MCF 10A (cell line): ENCODE measurements at regions of chr17 and their contacts with region 1.

Region 1: DNA sequence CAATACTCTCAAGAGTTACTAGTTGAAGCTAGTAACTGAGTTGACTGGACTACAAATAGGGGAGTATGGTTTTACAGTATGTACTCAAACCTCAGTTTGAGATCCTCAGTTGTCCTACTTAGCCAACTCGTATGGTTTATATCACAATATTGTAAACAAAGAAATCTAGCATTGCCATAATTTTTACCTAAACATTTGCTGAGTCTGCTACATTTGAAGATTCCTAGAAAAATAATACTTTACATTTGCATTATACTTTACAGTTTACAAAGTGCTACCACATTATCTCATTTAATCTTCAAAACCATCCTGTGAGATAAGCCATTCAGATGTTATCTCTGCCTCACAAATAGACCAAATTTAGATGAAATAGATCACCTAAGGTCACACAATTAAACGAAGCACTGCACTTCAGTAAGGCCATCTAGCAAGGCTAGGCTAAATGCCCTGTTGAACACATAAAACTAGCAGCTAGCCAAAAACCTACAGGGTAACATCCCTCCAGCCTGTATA is 16.3 kb downstream of the CBX1 start:
- DNase-seq: no peak
- H3K4me3 Mint-ChIP-seq: no peak overlapping the region
- H3K27ac Mint-ChIP-seq: no peak overlapping the region
- H3K4me1 Mint-ChIP-seq: no peaks in the 10 kb centered on the region
- H3K27me3 Mint-ChIP-seq: no peaks in the 10 kb centered on the region
- CTCF ChIP-seq: no peak

Region 2: DNA sequence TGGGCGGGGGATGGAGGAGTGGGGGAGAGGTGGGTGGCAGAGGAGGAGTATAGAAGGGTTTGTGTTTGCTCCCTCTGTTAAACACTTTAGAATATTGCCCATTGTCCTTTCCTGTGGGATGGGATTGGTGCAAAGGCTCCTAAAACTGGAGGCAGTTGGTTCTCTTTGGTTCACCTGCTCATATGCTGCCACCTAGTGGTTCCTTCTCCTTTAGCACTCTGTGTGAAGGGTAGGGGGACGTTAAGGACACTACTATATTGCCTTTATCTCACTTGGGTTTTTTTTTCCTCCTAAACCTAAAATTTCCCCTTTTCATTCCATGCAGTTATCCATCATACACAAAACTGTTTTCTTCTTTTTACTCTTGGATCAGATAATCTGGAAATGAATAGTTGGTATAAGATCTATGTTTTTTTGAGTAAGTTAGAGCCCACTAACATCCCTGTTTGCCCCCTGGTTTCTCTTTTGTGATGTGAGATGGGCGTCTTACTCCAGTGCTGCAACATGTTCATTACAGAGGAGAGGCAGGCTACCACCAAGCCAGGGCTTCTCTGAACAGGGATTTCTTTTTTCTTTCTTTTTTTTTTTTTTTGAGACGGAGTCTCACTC is 46.3 kb after region 1 on chr17:
- CTCF ChIA-PET with region 1: interaction called, 72 read pairs
- POLR2A ChIA-PET with region 1: interaction called, 5 read pairs
- intact Hi-C with region 1: loop called (anchors 1 kb)
- DNase-seq: peak; percentile 85
- H3K4me3 Mint-ChIP-seq: no peak overlapping the region
- H3K27ac Mint-ChIP-seq: no peak overlapping the region
- H3K4me1 Mint-ChIP-seq: peaks cover 13% of the 10 kb centered on the region
- H3K27me3 Mint-ChIP-seq: no peaks in the 10 kb centered on the region
- CTCF ChIP-seq: peak; percentile 76